ENCODE measurements at regions of chr13 and their contacts with region 1.

Region 1: GRCh38 chr13:77918391-77919245 is at the start of gene EDNRB:
- DNase-seq: peak; percentile 66
- H3K4me3 ChIP-seq: peak within 1 kb of the TSS; percentile 67 to 71 (median 67)
- H3K27ac ChIP-seq: no peak within 1 kb of the TSS
- H3K4me1 ChIP-seq: peaks cover 10% of the 10 kb centered on the region
- H3K27me3 ChIP-seq: no peaks in the 10 kb centered on the region
- CTCF ChIP-seq: peak; percentile 5 to 30
- POLR2A ChIP-seq: no peak
- total RNA-seq, gene EDNRB: 2.3 and 2.6 TPM in 2 replicates

Region 2: DNA sequence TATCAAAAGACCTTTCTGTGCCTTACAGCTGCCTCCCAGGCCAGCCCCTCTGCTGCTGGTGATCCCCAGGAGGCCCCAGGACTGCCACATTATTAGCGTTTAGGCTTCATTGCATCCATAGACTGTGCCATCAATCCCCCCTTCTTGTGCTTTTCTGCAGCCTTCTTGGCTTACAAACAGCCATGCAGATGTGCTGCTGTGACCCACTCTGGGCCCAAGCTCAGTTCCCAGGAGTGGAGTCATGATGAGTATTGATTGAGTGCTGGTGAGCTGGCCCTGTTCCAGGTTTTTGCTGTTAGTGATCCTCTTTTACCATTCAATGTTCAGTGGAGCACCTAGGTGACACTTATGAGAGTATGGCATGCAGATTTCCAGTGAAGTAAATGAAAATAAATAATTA is 281.0 kb before region 1 on chr13:
- CTCF ChIA-PET with region 1: no interaction called
- POLR2A ChIA-PET with region 1: no interaction called
- dilution Hi-C with region 1: no loop called
- intact Hi-C with region 1: no loop called
- DNase-seq: no peak
- H3K4me3 ChIP-seq: no peak overlapping the region
- H3K27ac ChIP-seq: no peak overlapping the region
- H3K4me1 ChIP-seq: no peaks in the 10 kb centered on the region
- H3K27me3 ChIP-seq: no peaks in the 10 kb centered on the region
- CTCF ChIP-seq: no peak
- POLR2A ChIP-seq: no peak

Region 3: GRCh38 chr13:77697217-77698103 is 221.2 kb before region 1 on chr13 and contains the start of gene SLAIN1:
- CTCF ChIA-PET with region 1: no interaction called
- POLR2A ChIA-PET with region 1: no interaction called
- dilution Hi-C with region 1: no loop called
- intact Hi-C with region 1: loop called (anchors 5 kb)
- DNase-seq: peak; percentile 61
- H3K4me3 ChIP-seq: peak within 1 kb of the TSS; percentile 65 to 87 (median 75)
- H3K27ac ChIP-seq: no peak within 1 kb of the TSS
- H3K4me1 ChIP-seq: no peaks in the 10 kb centered on the region
- H3K27me3 ChIP-seq: peaks cover 7 to 26% of the 10 kb centered on the region in 2 experiments
- CTCF ChIP-seq: no peak
- POLR2A ChIP-seq: no peak
- total RNA-seq, gene SLAIN1: 4.3 and 4.5 TPM in 2 replicates

Region 4: DNA sequence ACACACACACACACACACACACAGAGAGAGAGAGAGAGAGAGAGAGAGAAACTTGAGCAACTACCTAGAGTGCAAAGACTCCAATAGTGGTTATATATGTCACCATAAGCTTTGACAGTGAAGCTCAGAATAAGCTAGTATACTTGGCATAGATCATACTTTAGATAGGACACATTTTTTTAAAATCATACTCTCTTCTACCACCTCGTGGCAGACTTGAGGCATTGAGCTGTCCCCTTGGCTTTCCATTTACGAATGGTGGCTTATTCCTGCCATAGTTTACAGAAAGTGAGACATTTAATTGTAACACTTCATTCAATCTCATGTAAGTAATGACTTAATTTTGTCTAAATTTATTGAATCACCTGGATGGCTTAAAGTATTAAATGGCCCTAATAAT is 108.2 kb before region 1 on chr13:
- CTCF ChIA-PET with region 1: interaction called, 14 read pairs
- POLR2A ChIA-PET with region 1: no interaction called
- dilution Hi-C with region 1: no loop called
- intact Hi-C with region 1: no loop called
- DNase-seq: peak; percentile 45
- H3K4me3 ChIP-seq: no peak overlapping the region
- H3K27ac ChIP-seq: no peak overlapping the region
- H3K4me1 ChIP-seq: no peaks in the 10 kb centered on the region
- H3K27me3 ChIP-seq: peaks cover 5 to 8% of the 10 kb centered on the region in 2 experiments
- CTCF ChIP-seq: peak; percentile 26 to 43
- POLR2A ChIP-seq: no peak

Region 5: DNA sequence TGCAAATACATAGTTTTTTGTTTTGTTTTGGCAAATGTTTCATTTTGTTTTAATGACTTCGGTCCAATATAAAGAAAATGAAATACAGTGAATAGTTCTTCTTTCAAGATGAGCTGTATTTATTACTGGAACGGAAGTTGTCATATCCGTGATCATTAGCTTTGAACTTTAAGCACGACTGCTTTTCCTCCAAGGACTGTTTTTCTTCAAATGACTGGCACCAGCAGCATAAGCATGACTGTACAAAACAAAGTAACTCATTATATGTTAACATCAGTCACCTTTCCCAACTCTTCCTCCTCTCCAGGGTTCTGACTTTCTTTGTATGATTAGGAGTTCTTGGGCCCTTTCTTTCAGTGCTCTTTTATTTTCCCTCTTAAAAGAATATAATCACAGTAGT is 20.5 kb before region 1 on chr13:
- CTCF ChIA-PET with region 1: interaction called, 16 read pairs
- POLR2A ChIA-PET with region 1: no interaction called
- dilution Hi-C with region 1: no loop called
- intact Hi-C with region 1: loop called (anchors 1 kb)
- DNase-seq: peak; percentile 91
- H3K4me3 ChIP-seq: peak overlapping the region in 2 of 3 experiments; percentile 28 to 58
- H3K27ac ChIP-seq: peak overlapping the region; percentile 92
- H3K4me1 ChIP-seq: peaks cover 27% of the 10 kb centered on the region
- H3K27me3 ChIP-seq: no peaks in the 10 kb centered on the region
- CTCF ChIP-seq: no peak
- POLR2A ChIP-seq: no peak

Region 6: GRCh38 chr13:78022164-78022877 is 103.7 kb after region 1 on chr13:
- CTCF ChIA-PET with region 1: no interaction called
- POLR2A ChIA-PET with region 1: no interaction called
- dilution Hi-C with region 1: no loop called
- intact Hi-C with region 1: loop called (anchors 2 kb)
- DNase-seq: peak; percentile 95
- H3K4me3 ChIP-seq: no peak overlapping the region
- H3K27ac ChIP-seq: peak overlapping the region; percentile 72
- H3K4me1 ChIP-seq: peaks cover 25% of the 10 kb centered on the region
- H3K27me3 ChIP-seq: no peaks in the 10 kb centered on the region
- CTCF ChIP-seq: no peak
- POLR2A ChIP-seq: no peak